Right cardiac atrium (tissue), 5 donors: ENCODE measurements at regions of chr10 and their contacts with region 1.

Region 1: GRCh38 chr10:71212318-71213126 is at the start of gene UNC5B:
- DNase-seq: peak; percentile 93 to 98 (median 97)
- ATAC-seq: peak; percentile 89 to 92
- H3K4me3 ChIP-seq: peak within 1 kb of the TSS; percentile 51
- H3K27ac ChIP-seq: peak within 1 kb of the TSS; percentile 80
- H3K4me1 ChIP-seq: peaks cover 16% of the 10 kb centered on the region
- H3K27me3 ChIP-seq: no peaks in the 10 kb centered on the region
- total RNA-seq, gene UNC5B: 17.0 to 26.6 (median 24.0) TPM

Region 2: GRCh38 chr10:70913191-70913892 is 299.2 kb before region 1 on chr10:
- intact Hi-C with region 1: loop called in 2 of 4 experiments (anchors 5 kb)
- DNase-seq: no peak
- ATAC-seq: no peak
- H3K4me3 ChIP-seq: no peak overlapping the region
- H3K27ac ChIP-seq: no peak overlapping the region
- H3K4me1 ChIP-seq: no peaks in the 10 kb centered on the region
- H3K27me3 ChIP-seq: no peaks in the 10 kb centered on the region

Region 3: DNA sequence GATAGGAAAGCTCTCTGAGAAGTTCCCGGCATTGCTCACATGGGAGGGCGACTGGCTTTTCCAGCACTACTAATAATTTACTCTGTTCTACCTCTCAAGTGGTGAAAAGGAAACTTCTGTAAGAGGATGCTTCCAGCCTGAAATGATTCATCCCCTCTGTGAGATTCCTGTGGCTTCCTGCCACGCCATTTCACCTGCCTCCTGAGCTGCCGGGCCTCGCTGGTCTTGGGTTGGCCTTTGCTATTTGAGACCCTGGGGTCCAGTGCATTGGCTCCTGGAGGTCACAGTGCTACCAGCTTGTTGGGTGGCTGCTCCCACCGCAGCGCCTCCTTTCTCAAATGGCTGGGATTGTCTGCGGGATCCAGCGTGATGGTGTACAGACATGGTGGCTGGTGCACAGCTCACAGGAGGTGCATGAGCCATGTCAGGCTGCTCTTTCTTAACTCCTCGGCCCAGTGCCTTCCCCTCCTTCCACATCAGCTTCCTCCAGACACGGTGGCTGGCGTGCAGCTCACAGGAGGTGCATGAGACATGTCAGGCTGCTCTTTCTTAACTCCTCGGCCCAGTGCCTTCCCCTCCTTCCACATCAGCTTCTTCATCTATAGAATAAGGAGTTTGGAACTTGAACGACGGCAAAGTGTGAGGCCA is 281.2 kb before region 1 on chr10:
- intact Hi-C with region 1: loop called (anchors 5 to 10 kb)
- DNase-seq: peak in 1 of 3 donors; percentile 32
- ATAC-seq: no peak
- H3K4me3 ChIP-seq: no peak overlapping the region
- H3K27ac ChIP-seq: no peak overlapping the region
- H3K4me1 ChIP-seq: peaks cover 4% of the 10 kb centered on the region
- H3K27me3 ChIP-seq: no peaks in the 10 kb centered on the region

Region 4: GRCh38 chr10:71143610-71144009 is 68.9 kb before region 1 on chr10:
- intact Hi-C with region 1: loop called in 1 of 4 experiments (anchors 2 kb)
- DNase-seq: no peak
- ATAC-seq: peak in 1 of 2 donors; percentile 5
- H3K4me3 ChIP-seq: no peak overlapping the region
- H3K27ac ChIP-seq: no peak overlapping the region
- H3K4me1 ChIP-seq: no peaks in the 10 kb centered on the region
- H3K27me3 ChIP-seq: no peaks in the 10 kb centered on the region

Region 5: GRCh38 chr10:71285180-71285545 is 72.6 kb after region 1 on chr10:
- intact Hi-C with region 1: loop called in 1 of 4 experiments (anchors 5 kb)
- DNase-seq: peak in 2 of 3 donors; percentile 64 to 70
- ATAC-seq: peak; percentile 45 to 64
- H3K4me3 ChIP-seq: no peak overlapping the region
- H3K27ac ChIP-seq: no peak overlapping the region
- H3K4me1 ChIP-seq: no peaks in the 10 kb centered on the region
- H3K27me3 ChIP-seq: no peaks in the 10 kb centered on the region

Region 6: GRCh38 chr10:71319042-71319799 is 106.7 kb after region 1 on chr10 and contains the start of gene SLC29A3:
- intact Hi-C with region 1: no loop called
- DNase-seq: peak; percentile 84 to 94 (median 93)
- ATAC-seq: peak; percentile 93
- H3K4me3 ChIP-seq: peak within 1 kb of the TSS; percentile 82
- H3K27ac ChIP-seq: peak within 1 kb of the TSS; percentile 22
- H3K4me1 ChIP-seq: no peaks in the 10 kb centered on the region
- H3K27me3 ChIP-seq: no peaks in the 10 kb centered on the region
- total RNA-seq, gene SLC29A3: 2.2 to 2.7 (median 2.4) TPM